Sciatic nerve (tissue), 2 donors: ENCODE measurements at regions of chr1 and their contacts with region 1.

Region 1: DNA sequence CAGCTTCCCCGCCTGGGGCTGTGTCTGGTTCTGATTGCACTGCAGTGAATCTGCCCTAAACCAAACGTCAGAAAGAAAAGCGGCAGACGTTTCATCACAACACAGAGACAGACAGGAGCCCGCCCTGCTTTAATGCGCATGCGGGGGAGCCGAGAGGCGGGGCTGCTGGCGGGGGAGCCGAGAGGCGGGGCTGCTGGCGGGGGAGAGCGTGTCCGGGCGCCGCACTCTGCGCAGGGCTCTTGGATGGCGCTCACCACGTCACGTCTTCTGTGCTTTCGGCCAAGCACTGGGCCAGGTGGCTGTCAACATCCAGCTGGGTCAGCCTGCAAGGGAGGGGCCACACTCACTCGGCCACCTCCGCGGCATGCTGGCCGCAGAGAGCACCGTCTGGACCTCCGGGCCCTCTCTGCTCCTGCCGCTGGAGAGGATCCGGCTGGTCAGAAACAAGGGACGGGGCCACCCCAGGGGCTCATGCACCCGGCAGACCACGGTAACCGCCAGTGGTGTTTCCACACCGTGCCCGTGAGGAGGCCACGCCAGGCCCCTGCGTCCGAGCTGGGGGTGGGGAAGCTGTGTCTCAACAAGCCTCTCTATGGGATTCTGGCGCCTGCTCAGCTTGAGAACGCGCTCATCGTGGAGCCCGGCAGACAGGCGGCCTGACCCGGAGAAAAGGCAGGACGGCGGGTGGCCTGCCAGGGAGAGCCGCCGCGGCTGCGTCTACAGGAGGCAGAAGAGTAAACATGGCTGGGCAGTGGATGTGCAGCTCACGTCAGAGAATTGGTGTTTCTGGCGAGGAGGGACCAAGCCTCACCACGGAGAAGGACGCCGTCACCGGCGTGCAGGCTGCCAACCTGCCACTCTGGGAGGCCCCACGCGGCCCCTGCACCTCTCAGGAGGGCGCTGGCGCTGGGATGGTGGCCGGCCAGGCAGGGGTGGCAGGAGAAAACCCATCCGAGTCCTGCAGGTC is 4.8 kb downstream of the FAAP20 start:
- DNase-seq: peak; percentile 97
- ATAC-seq: peak; percentile 94

Region 2: DNA sequence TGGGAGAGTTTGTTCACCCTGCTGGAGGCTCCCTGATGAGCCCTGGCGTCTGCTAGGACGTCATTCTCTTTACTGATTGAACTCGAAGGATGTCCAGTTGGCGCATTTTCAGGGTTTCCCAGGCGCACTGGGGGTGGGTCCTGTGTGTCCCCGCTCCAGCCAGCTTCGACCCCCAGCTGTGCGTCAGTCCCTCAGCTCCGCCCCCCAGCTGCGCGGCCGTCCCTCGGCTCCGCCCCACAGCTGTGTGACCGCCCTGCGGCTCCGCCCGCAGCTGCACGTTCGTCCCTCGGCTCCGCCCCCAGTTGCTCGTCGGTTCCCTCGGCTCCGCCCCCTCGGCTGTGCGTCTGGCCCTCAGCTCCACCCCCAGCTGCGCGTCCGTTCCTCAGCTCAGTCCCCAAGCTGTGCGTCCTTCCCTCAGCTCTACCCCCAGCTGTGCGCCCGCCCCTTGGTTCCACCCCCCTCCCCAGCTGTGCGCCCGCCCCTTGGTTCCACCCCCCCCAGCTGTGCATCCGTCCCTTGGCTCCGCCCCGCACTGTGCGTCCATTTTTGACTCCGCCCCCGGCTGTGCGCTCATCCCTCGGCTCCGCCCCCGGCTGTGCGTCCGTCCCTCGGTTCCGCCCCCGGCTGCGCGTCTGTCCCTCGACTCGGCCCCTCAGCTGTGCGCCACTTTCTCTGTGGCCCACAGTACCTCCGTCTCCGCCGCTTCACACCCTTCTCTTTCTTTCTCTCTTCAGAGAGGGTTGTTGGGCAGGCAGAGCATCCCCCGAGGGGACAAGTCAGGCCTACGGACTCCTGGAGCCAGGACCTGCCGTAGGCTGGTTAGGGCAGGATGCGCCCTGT is 56.5 kb before region 1 on chr1:
- intact Hi-C with region 1: loop called (anchors 10 kb)
- DNase-seq: peak; percentile 100
- ATAC-seq: peak; percentile 94

Region 3: DNA sequence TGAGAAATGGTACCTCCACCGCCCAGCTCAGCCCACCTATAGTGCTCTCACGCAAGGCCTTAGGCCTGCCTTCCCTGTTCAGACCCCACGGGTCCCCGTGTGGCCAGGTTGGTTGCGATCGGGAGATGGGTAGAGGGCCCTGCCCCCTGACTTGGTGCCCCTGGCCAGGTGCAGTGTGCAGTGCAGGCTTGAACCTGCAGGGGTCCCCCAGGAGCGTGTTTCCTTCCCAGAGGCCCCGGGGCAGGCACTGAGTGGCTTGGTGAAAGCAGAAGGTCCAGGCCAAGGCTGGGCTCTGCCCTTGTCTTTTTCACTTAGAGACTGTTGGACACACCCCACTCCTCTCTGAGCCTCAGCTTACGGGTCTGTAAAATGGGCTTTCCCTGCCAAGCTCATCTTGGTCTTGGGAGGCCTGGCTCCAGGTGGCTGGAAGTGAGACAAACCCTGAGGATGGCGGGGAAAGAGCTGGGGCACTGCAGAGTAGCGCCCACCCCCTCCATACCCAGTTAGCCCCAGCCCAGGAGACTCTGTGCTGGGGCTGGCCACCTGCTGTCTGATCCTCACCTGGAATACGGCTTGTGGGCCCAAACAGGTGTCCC is 349.7 kb after region 1 on chr1:
- intact Hi-C with region 1: loop called (anchors 10 kb)
- DNase-seq: no peak
- ATAC-seq: no peak